Activated CD4-positive, alpha-beta T cell treated with anti-CD3 and anti-CD28 coated beads for 36 hours (primary cell): ENCODE measurements at regions of chr19 and their contacts with region 1.

Region 1: GRCh38 chr19:49640113-49640898 is at the start of gene RRAS:
- DNase-seq: peak; percentile 100
- ATAC-seq: peak; percentile 76
- H3K4me3 Mint-ChIP-seq: peak within 1 kb of the TSS; percentile 100
- H3K27ac Mint-ChIP-seq: peak within 1 kb of the TSS; percentile 100
- H3K4me1 Mint-ChIP-seq: peaks cover 48% of the 10 kb centered on the region
- H3K27me3 Mint-ChIP-seq: no peaks in the 10 kb centered on the region
- total RNA-seq, gene RRAS: 9.7 to 11.7 TPM

Region 2: GRCh38 chr19:48637170-48637947 is 1002.9 kb before region 1 on chr19 and contains the start of gene DBP:
- CTCF ChIA-PET with region 1: no interaction called
- POLR2A ChIA-PET with region 1: no interaction called
- intact Hi-C with region 1: loop called in 1 of 2 experiments (anchors 5 kb)
- DNase-seq: peak; percentile 98
- ATAC-seq: peak; percentile 75
- H3K4me3 Mint-ChIP-seq: peak within 1 kb of the TSS; percentile 83
- H3K27ac Mint-ChIP-seq: peak within 1 kb of the TSS; percentile 99
- H3K4me1 Mint-ChIP-seq: peaks cover 55% of the 10 kb centered on the region
- H3K27me3 Mint-ChIP-seq: no peaks in the 10 kb centered on the region
- total RNA-seq, gene DBP: 8.3 to 12.4 TPM

Region 3: GRCh38 chr19:49118565-49119410 is 521.5 kb before region 1 on chr19 and contains the start of gene C19orf73:
- CTCF ChIA-PET with region 1: no interaction called
- POLR2A ChIA-PET with region 1: no interaction called
- intact Hi-C with region 1: loop called in 1 of 2 experiments (anchors 2 kb)
- DNase-seq: peak; percentile 98
- ATAC-seq: peak; percentile 85
- H3K4me3 Mint-ChIP-seq: peak within 1 kb of the TSS; percentile 80
- H3K27ac Mint-ChIP-seq: peak within 1 kb of the TSS; percentile 84
- H3K4me1 Mint-ChIP-seq: peaks cover 28% of the 10 kb centered on the region
- H3K27me3 Mint-ChIP-seq: peaks cover 8% of the 10 kb centered on the region
- total RNA-seq, gene C19orf73: 1.7 to 2.0 TPM

Region 4: DNA sequence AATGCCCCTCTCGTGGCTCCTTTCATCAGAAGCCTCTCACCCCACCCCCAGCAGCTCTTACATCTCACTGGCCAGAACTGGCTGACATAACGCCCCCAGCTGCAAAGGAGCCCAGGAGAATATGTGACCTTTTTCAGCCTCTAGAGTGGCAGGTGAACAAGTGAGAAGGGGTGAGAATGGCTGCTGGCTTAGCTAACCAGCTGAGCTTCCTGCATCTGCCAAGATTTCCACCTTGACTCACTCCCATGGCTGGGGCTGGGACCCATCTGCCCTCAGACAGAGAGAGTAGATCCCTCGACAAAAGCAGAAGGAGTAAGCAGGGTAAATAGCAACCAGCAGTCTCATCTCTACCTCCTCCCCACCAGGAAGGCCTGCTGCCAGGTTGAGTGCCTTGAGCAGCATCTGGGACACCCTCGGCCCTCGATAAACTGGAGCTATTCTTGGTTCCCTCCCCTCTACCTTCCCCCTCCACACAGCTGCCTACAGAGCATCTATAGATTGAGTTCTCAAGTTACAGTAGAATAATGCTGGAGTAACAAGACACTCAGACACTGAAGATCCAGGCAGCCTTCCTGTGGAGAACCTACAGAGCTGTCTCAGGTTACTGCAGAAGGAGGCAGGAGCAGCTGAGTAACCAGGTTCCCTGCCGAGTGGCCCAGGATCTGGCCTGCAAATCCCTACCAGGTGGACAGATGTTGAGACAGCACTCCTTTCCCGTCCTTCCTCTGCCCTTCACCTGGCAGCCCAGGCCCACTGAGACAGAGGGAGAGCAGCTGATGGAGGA is 236.7 kb before region 1 on chr19:
- CTCF ChIA-PET with region 1: no interaction called
- POLR2A ChIA-PET with region 1: no interaction called
- intact Hi-C with region 1: no loop called
- DNase-seq: no peak
- ATAC-seq: peak; percentile 28
- H3K4me3 Mint-ChIP-seq: no peak overlapping the region
- H3K27ac Mint-ChIP-seq: no peak overlapping the region
- H3K4me1 Mint-ChIP-seq: peaks cover 36% of the 10 kb centered on the region
- H3K27me3 Mint-ChIP-seq: no peaks in the 10 kb centered on the region

Region 5: GRCh38 chr19:49555600-49556411 is 84.5 kb before region 1 on chr19:
- CTCF ChIA-PET with region 1: interaction called, 3 read pairs
- POLR2A ChIA-PET with region 1: no interaction called
- intact Hi-C with region 1: loop called in 1 of 2 experiments (anchors 1 kb)
- DNase-seq: peak; percentile 92
- ATAC-seq: peak; percentile 62
- H3K4me3 Mint-ChIP-seq: peak overlapping the region; percentile 35
- H3K27ac Mint-ChIP-seq: peak overlapping the region; percentile 98
- H3K4me1 Mint-ChIP-seq: peaks cover 82% of the 10 kb centered on the region
- H3K27me3 Mint-ChIP-seq: no peaks in the 10 kb centered on the region

Region 6: DNA sequence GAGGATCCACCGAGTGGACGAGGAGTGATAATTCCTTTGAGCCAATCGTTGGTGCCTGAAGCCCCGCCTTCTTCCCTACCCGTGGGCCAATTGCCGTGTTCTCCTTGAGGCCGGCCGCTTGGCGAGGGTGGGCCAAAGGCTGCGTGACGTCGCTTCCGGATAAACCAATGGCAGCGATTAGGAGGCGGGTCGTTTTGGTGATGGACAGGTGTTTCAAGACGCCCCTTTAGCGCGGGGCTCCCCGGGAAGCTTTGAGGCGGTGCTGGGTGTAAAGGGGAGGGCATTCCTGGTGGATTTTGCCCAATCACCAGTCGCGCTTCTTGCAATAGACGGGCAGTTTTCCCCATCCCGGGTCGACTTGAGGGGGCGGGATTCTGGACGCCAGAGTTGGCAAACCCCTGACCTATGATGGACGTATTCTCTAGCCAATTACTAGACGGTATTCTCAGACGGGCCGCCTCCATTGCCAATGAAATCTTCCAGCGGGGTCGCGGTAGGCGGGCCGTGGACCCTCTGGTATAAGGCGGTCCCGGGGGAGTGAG is 36.5 kb after region 1 on chr19:
- CTCF ChIA-PET with region 1: interaction called, 62 read pairs
- POLR2A ChIA-PET with region 1: interaction called, 39 read pairs
- intact Hi-C with region 1: loop called (anchors 1 kb)
- DNase-seq: peak; percentile 100
- ATAC-seq: peak; percentile 77
- H3K4me3 Mint-ChIP-seq: peak overlapping the region; percentile 94
- H3K27ac Mint-ChIP-seq: peak overlapping the region; percentile 99
- H3K4me1 Mint-ChIP-seq: peaks cover 39% of the 10 kb centered on the region
- H3K27me3 Mint-ChIP-seq: no peaks in the 10 kb centered on the region

Region 7: GRCh38 chr19:49869441-49870176 is 229.3 kb after region 1 on chr19:
- CTCF ChIA-PET with region 1: no interaction called
- POLR2A ChIA-PET with region 1: no interaction called
- intact Hi-C with region 1: loop called in 1 of 2 experiments (anchors 1 kb)
- DNase-seq: peak; percentile 94
- ATAC-seq: peak; percentile 87
- H3K4me3 Mint-ChIP-seq: no peak overlapping the region
- H3K27ac Mint-ChIP-seq: no peak overlapping the region
- H3K4me1 Mint-ChIP-seq: peaks cover 39% of the 10 kb centered on the region
- H3K27me3 Mint-ChIP-seq: no peaks in the 10 kb centered on the region

Region 8: DNA sequence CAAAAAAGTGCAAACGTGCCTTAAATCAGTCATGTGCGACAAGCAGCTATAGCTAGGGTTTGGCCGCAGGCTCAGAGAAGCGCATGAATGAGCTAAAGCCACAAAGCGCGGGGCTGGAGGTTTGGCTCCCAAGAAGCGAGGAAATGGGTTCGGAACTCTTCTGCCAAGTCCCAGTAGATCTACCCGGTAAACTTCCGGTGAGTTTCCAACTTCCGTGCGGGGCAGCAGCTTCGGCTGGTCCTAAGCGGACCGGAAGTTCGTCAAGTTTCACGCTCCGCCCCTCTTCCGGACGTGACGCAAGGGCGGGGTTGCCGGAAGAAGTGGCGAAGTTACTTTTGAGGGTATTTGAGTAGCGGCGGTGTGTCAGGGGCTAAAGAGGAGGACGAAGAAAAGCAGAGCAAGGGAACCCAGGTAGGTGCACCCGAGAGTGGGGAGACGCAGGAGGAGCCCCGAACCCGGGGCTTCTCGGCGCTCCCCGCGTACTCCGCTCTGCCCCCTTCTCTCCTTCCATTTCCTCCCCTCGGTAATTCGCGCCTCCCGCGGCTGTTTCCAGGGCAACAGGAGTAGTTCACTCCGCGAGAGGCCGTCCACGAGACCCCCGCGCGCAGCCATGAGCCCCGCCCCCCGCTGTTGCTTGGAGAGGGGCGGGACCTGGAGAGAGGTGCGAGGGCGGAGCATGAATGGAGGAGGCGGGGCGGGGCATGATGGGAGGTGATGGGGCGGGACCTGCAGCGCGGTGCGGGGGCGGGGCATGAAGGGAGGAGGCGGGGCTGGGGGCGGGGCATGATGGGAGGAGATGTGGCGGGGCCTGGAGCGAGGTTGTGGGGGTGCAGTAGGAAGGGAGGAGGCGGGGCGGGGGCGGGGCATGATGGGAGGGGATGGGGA is 736.1 kb after region 1 on chr19 and contains the start of gene NR1H2:
- CTCF ChIA-PET with region 1: no interaction called
- POLR2A ChIA-PET with region 1: no interaction called
- intact Hi-C with region 1: loop called in 1 of 2 experiments (anchors 2 kb)
- DNase-seq: peak; percentile 97
- ATAC-seq: peak; percentile 89
- H3K4me3 Mint-ChIP-seq: peak within 1 kb of the TSS; percentile 89
- H3K27ac Mint-ChIP-seq: peak within 1 kb of the TSS; percentile 97
- H3K4me1 Mint-ChIP-seq: peaks cover 21% of the 10 kb centered on the region
- H3K27me3 Mint-ChIP-seq: no peaks in the 10 kb centered on the region
- total RNA-seq, gene NR1H2: 50.3 to 53.6 TPM